WTC11 (cell line): ENCODE measurements at regions of chr7 and their contacts with region 1.

Region 1: DNA sequence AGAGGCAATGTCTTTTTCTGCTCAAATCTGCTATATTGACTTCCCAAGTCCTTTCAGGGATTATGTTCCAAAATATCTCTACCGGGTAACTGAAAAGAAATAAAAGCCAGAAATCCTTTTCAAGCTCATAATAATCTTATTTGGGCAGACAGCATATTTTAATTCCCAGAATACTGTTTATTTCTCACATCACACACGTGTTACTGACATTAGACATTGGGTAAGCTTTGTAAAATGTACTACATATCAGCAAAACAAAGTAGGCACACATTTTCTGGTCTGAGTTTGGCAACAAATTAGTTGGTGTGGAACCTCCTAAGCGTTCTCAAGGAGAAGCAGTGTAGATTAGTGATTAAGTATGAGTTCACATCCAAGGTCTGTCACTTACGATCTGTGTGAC is 10.4 kb upstream of the PTPRZ1 start:
- DNase-seq: no peak
- ATAC-seq: no peak
- H3K4me3 Mint-ChIP-seq: no peak overlapping the region
- H3K27ac Mint-ChIP-seq: no peak overlapping the region
- H3K4me1 Mint-ChIP-seq: no peaks in the 10 kb centered on the region
- H3K27me3 Mint-ChIP-seq: no peaks in the 10 kb centered on the region
- CTCF ChIP-seq: no peak

Region 2: GRCh38 chr7:121936951-121937623 is 74.5 kb after region 1 on chr7:
- CTCF ChIA-PET with region 1: no interaction called
- POLR2A ChIA-PET with region 1: interaction called, 10 read pairs
- DNase-seq: peak; percentile 33
- ATAC-seq: peak; percentile 56
- H3K4me3 Mint-ChIP-seq: no peak overlapping the region; the same call in 1 of the 2 replicates
- H3K27ac Mint-ChIP-seq: peak overlapping the region; percentile 99
- H3K4me1 Mint-ChIP-seq: peaks cover 92% of the 10 kb centered on the region
- H3K27me3 Mint-ChIP-seq: no peaks in the 10 kb centered on the region
- CTCF ChIP-seq: no peak

Region 3: DNA sequence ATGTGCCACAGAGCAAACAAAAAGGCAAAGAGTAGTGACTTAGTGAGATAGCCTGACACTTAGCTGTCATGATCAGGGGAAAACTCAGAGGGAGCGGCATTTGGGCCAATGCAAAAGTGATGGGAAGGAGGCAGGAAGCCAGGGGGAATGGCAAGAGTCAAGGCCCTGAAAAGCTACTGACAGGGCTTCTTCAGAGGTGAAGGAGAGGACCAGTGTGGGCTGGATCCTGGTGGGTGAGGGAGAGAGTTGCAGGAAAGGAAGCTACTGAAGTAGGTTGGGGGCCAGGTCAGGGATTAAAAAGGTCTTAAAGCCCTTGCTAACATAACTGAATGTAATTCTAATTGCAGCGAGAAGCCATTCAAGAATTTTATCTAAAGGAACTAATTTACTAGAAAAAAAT is 164.5 kb after region 1 on chr7:
- CTCF ChIA-PET with region 1: no interaction called
- POLR2A ChIA-PET with region 1: no interaction called
- DNase-seq: no peak
- ATAC-seq: peak; percentile 83
- H3K4me3 Mint-ChIP-seq: no peak overlapping the region
- H3K27ac Mint-ChIP-seq: peak overlapping the region; percentile 71
- H3K4me1 Mint-ChIP-seq: no peaks in the 10 kb centered on the region
- H3K27me3 Mint-ChIP-seq: no peaks in the 10 kb centered on the region
- CTCF ChIP-seq: no peak